CD4-positive, alpha-beta memory T cell (primary cell): ENCODE measurements at regions of chr1 and their contacts with region 1.

Region 1: GRCh38 chr1:1399187-1399871 is at the start of gene CCNL2:
- DNase-seq: peak; percentile 98 to 99 (median 99)
- H3K4me3 ChIP-seq: peak within 1 kb of the TSS; percentile 92
- H3K4me3 Mint-ChIP-seq: peak within 1 kb of the TSS; percentile 89 to 94 (median 92)
- H3K27ac ChIP-seq: peak within 1 kb of the TSS; percentile 85
- H3K27ac Mint-ChIP-seq: peak within 1 kb of the TSS; percentile 89 to 96 (median 94)
- H3K4me1 ChIP-seq: peaks cover 36% of the 10 kb centered on the region
- H3K4me1 Mint-ChIP-seq: peaks cover 17 to 63% (median 41%) of the 10 kb centered on the region in 4 donors
- H3K27me3 ChIP-seq: no peaks in the 10 kb centered on the region
- H3K27me3 Mint-ChIP-seq: no peaks in the 10 kb centered on the region
- total RNA-seq, gene CCNL2: 388 to 394 TPM

Region 2: GRCh38 chr1:1290238-1290731 is 109.0 kb before region 1 on chr1:
- CTCF ChIA-PET with region 1: no interaction called
- POLR2A ChIA-PET with region 1: no interaction called
- intact Hi-C with region 1: no loop called
- DNase-seq: peak; percentile 40 to 71 (median 56)
- H3K4me3 ChIP-seq: no peak overlapping the region
- H3K4me3 Mint-ChIP-seq: no peak overlapping the region
- H3K27ac ChIP-seq: no peak overlapping the region
- H3K27ac Mint-ChIP-seq: no peak overlapping the region
- H3K4me1 ChIP-seq: no peaks in the 10 kb centered on the region
- H3K4me1 Mint-ChIP-seq: peaks cover 0 to 3% (median under 1%) of the 10 kb centered on the region in 4 donors
- H3K27me3 ChIP-seq: no peaks in the 10 kb centered on the region
- H3K27me3 Mint-ChIP-seq: no peaks in the 10 kb centered on the region

Region 3: DNA sequence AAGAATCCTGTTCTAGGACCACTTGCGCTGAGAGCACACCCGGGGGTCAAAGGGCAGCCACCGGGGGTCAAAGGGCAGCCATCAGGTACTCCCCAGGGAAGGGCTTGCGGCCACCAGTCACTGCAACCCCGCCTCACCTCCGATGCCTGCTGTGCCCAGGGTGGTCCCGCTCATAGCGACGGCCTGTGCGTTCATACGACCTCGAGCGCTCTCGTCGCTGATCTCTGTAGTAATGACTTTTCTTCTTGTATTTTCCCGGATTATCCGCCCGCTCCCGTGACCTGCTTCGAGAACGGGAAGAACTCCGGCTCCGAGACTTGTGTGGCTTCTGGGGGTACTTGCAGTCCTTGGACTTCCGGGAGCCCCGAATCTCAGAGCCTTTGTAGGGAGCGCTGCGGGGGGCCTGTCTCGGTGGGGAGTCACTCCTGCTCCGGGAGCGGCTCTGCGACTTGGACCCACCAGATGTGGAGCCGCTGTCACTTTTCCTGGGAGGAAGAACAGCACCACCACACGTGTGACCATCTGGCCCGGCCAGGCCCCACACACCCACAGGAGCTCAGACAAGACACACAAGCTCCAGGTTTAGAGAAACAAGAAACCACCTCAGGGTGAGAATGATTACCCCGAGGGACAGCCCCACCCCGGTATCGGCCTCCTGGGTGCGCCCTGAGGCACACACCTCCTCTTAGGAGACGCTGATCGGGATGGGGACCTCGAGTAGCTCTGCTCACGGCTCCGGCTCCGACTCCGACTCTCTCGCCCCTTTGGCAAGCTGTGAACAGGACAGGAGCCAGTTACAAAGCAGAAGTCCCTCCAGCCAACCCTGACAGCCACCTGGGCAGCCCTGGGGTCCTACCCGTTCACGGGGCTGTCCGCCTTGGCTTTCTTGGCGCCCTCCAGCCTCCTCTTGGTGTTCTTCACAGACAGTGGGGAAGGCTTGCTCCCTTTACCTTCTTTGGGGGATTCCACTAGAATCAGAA is 11.9 kb before region 1 on chr1:
- CTCF ChIA-PET with region 1: no interaction called
- POLR2A ChIA-PET with region 1: interaction called, 20 read pairs
- intact Hi-C with region 1: no loop called
- DNase-seq: no peak
- H3K4me3 ChIP-seq: no peak overlapping the region
- H3K4me3 Mint-ChIP-seq: no peak overlapping the region
- H3K27ac ChIP-seq: no peak overlapping the region
- H3K27ac Mint-ChIP-seq: no peak overlapping the region
- H3K4me1 ChIP-seq: no peaks in the 10 kb centered on the region
- H3K4me1 Mint-ChIP-seq: peaks cover 0 to 3% (median under 1%) of the 10 kb centered on the region in 4 donors
- H3K27me3 ChIP-seq: no peaks in the 10 kb centered on the region
- H3K27me3 Mint-ChIP-seq: no peaks in the 10 kb centered on the region